CD8-positive, alpha-beta T cell (primary cell): ENCODE measurements at regions of chr17 and their contacts with region 1.

Region 1: GRCh38 chr17:81238817-81239600 is at the starts of genes NDUFAF8 and TEPSIN:
- DNase-seq: peak; percentile 91 to 99 (median 95)
- ATAC-seq: peak; percentile 94
- H3K4me3 ChIP-seq: peak within 1 kb of the TSS; percentile 80 to 84
- H3K4me3 Mint-ChIP-seq: peak within 1 kb of the TSS; percentile 92
- H3K27ac ChIP-seq: peak within 1 kb of the TSS; percentile 51 to 68
- H3K27ac Mint-ChIP-seq: peak within 1 kb of the TSS; percentile 87
- H3K4me1 ChIP-seq: peaks cover 39% of the 10 kb centered on the region
- H3K4me1 Mint-ChIP-seq: peaks cover 43% of the 10 kb centered on the region
- H3K27me3 ChIP-seq: no peaks in the 10 kb centered on the region
- H3K27me3 Mint-ChIP-seq: no peaks in the 10 kb centered on the region
- CTCF ChIP-seq: no peak
- total RNA-seq, gene NDUFAF8: 40.6 to 50.9 TPM
- total RNA-seq, gene TEPSIN: 81.4 to 88.8 TPM

Region 2: DNA sequence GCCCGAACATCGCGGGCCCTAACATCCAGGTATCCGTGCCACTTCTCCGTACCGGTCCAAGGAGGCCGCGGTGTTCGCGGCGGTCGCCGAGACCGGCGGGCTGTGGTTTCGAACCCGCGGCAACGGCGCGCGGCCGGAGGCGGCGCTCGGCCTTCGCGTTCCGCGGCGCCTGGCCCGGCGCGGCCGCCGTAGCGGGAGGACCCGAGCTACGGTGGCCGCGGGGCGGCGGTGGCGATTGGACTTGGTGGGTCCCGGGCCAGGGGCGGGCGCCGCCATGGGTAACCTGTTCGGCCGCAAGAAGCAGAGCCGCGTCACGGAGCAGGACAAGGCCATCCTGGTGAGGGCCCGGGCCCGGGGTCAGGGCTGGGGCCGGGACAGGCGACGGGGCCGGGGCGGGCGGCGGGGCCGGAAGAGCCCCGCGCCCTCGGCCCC is 247.3 kb before region 1 on chr17 and contains the start of gene CHMP6:
- CTCF ChIA-PET with region 1: no interaction called
- POLR2A ChIA-PET with region 1: interaction called, 3 read pairs
- intact Hi-C with region 1: loop called in 1 of 2 experiments (anchors 1 kb)
- DNase-seq: peak; percentile 48 to 86 (median 70)
- ATAC-seq: peak; percentile 69
- H3K4me3 ChIP-seq: peak within 1 kb of the TSS; percentile 74 to 84
- H3K4me3 Mint-ChIP-seq: peak within 1 kb of the TSS; percentile 81
- H3K27ac ChIP-seq: peak within 1 kb of the TSS; percentile 59 to 84
- H3K27ac Mint-ChIP-seq: peak within 1 kb of the TSS; percentile 84
- H3K4me1 ChIP-seq: peaks cover 32% of the 10 kb centered on the region
- H3K4me1 Mint-ChIP-seq: peaks cover 20% of the 10 kb centered on the region
- H3K27me3 ChIP-seq: no peaks in the 10 kb centered on the region
- H3K27me3 Mint-ChIP-seq: no peaks in the 10 kb centered on the region
- CTCF ChIP-seq: no peak
- total RNA-seq, gene CHMP6: 10.6 to 11.5 TPM

Region 3: GRCh38 chr17:81034779-81035388 is 204.1 kb before region 1 on chr17 and contains the start of gene BAIAP2:
- CTCF ChIA-PET with region 1: no interaction called
- POLR2A ChIA-PET with region 1: no interaction called
- intact Hi-C with region 1: loop called (anchors 2 kb)
- DNase-seq: peak; percentile 96 to 100 (median 98)
- ATAC-seq: peak; percentile 86
- H3K4me3 ChIP-seq: peak within 1 kb of the TSS; percentile 53 to 60
- H3K4me3 Mint-ChIP-seq: peak within 1 kb of the TSS; percentile 95
- H3K27ac ChIP-seq: peak within 1 kb of the TSS in 1 of 2 experiments; percentile 40
- H3K27ac Mint-ChIP-seq: peak within 1 kb of the TSS; percentile 93
- H3K4me1 ChIP-seq: peaks cover 11% of the 10 kb centered on the region
- H3K4me1 Mint-ChIP-seq: peaks cover 25% of the 10 kb centered on the region
- H3K27me3 ChIP-seq: no peaks in the 10 kb centered on the region
- H3K27me3 Mint-ChIP-seq: no peaks in the 10 kb centered on the region
- CTCF ChIP-seq: no peak
- total RNA-seq, gene BAIAP2: 8.5 to 9.1 TPM

Region 4: GRCh38 chr17:81142301-81143199 is 96.5 kb before region 1 on chr17:
- CTCF ChIA-PET with region 1: interaction called, 7 read pairs
- POLR2A ChIA-PET with region 1: no interaction called
- intact Hi-C with region 1: loop called in 1 of 2 experiments (anchors 1 kb)
- DNase-seq: peak; percentile 44 to 73 (median 57)
- ATAC-seq: peak; percentile 72
- H3K4me3 ChIP-seq: no peak overlapping the region
- H3K4me3 Mint-ChIP-seq: no peak overlapping the region
- H3K27ac ChIP-seq: no peak overlapping the region
- H3K27ac Mint-ChIP-seq: no peak overlapping the region
- H3K4me1 ChIP-seq: no peaks in the 10 kb centered on the region
- H3K4me1 Mint-ChIP-seq: no peaks in the 10 kb centered on the region
- H3K27me3 ChIP-seq: peaks cover 0 to 4% of the 10 kb centered on the region in 2 experiments
- H3K27me3 Mint-ChIP-seq: peaks cover 4% of the 10 kb centered on the region
- CTCF ChIP-seq: peak; percentile 47

Region 5: DNA sequence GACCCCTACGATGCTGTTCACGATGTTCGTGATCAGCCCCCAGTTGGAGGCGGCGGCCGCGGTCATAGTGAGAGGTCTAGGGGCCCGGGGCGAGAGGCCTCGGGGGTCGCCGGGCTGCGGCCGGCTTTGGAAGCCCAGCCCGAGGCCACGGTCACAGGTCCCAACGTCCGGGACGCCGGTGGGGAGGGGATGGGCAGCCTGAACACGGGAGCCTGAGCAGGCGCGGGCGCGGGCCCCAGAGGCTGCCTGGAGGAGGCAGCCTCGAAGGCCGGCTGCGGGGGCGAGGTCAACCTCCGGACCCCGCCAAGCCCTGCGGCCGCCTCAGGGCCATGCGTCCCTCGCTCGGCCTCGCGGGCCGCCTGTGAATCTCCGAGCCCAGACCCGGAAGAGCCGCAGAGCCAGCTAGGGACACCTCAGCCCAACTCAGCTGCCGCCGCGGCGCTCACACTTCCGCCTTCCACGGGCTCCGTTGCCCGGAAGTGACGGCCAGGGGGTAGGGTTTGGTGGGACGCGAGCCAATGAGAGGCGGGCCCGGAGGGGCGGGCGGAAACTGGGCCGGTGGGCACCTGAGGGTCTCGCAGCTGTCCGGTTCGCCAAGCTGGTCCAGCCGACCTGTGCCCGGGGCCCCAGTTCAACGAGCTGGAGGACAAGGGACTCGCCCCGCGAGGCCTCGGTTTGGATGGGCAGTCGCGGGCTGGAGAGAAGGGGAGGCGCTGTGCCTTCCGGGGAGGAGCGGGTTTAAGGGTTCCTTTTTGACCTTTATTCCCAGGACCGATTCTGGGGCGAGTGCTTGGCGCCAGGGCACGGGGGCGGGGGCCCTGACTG is 56.1 kb after region 1 on chr17 and contains the start of gene SLC38A10:
- CTCF ChIA-PET with region 1: no interaction called
- POLR2A ChIA-PET with region 1: interaction called, 4 read pairs
- intact Hi-C with region 1: loop called (anchors 1 kb)
- DNase-seq: peak; percentile 78 to 94 (median 91)
- ATAC-seq: peak; percentile 83
- H3K4me3 ChIP-seq: peak within 1 kb of the TSS; percentile 77 to 98
- H3K4me3 Mint-ChIP-seq: peak within 1 kb of the TSS; percentile 94
- H3K27ac ChIP-seq: peak within 1 kb of the TSS; percentile 85 to 90
- H3K27ac Mint-ChIP-seq: peak within 1 kb of the TSS; percentile 96
- H3K4me1 ChIP-seq: peaks cover 24% of the 10 kb centered on the region
- H3K4me1 Mint-ChIP-seq: peaks cover 42% of the 10 kb centered on the region
- H3K27me3 ChIP-seq: no peaks in the 10 kb centered on the region
- H3K27me3 Mint-ChIP-seq: no peaks in the 10 kb centered on the region
- CTCF ChIP-seq: no peak
- total RNA-seq, gene SLC38A10: 16.1 to 17.4 TPM

Region 6: GRCh38 chr17:81315129-81315884 is 76.3 kb after region 1 on chr17:
- CTCF ChIA-PET with region 1: no interaction called
- POLR2A ChIA-PET with region 1: no interaction called
- intact Hi-C with region 1: no loop called
- DNase-seq: no peak
- ATAC-seq: no peak
- H3K4me3 ChIP-seq: no peak overlapping the region
- H3K4me3 Mint-ChIP-seq: no peak overlapping the region
- H3K27ac ChIP-seq: no peak overlapping the region
- H3K27ac Mint-ChIP-seq: no peak overlapping the region
- H3K4me1 ChIP-seq: no peaks in the 10 kb centered on the region
- H3K4me1 Mint-ChIP-seq: no peaks in the 10 kb centered on the region
- H3K27me3 ChIP-seq: peaks cover 0 to under 1% of the 10 kb centered on the region in 2 experiments
- H3K27me3 Mint-ChIP-seq: peaks cover 12% of the 10 kb centered on the region
- CTCF ChIP-seq: no peak